GM12878 (cell line): ENCODE measurements at regions of chr5 and their contacts with region 1.

Region 1: GRCh38 chr5:156178117-156178516 is 148.8 kb upstream of the SGCD start:
- DNase-seq: no peak
- ATAC-seq: no peak
- H3K4me3 ChIP-seq: no peak overlapping the region
- H3K27ac ChIP-seq: no peak overlapping the region
- H3K4me1 ChIP-seq: no peaks in the 10 kb centered on the region
- H3K27me3 ChIP-seq: no peaks in the 10 kb centered on the region
- CTCF ChIP-seq: no peak
- EP300 ChIP-seq: no peak
- POLR2A ChIP-seq: no peak
- RAD21 ChIP-seq: no peak

Region 2: DNA sequence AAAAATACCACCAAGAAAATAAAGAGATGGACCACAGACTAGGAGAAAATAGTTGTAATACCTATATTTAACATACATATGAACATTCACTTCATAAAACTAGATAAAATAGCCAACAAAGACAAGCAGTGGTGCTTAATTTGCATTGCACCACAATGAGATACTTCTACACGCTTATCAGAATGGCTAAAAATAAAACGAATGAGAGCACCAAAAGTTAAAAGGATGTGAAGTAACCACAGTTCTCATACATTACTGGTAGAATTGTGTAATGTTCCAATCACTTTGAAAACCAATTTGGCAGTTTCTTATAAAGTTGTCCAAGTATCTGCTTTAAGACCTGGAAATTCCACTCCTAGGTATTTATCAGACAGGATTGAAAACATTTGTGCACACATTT is 50.1 kb before region 1 on chr5:
- CTCF ChIA-PET with region 1: no interaction called
- POLR2A ChIA-PET with region 1: interaction called, 10 read pairs
- RAD21 ChIA-PET with region 1: no interaction called
- SMC1A ChIA-PET with region 1: no interaction called
- in situ Hi-C with region 1: no loop called
- intact Hi-C with region 1: no loop called
- DNase-seq: peak; percentile 2
- ATAC-seq: peak; percentile 57
- H3K4me3 ChIP-seq: no peak overlapping the region
- H3K27ac ChIP-seq: no peak overlapping the region
- H3K4me1 ChIP-seq: no peaks in the 10 kb centered on the region
- H3K27me3 ChIP-seq: no peaks in the 10 kb centered on the region
- CTCF ChIP-seq: no peak
- EP300 ChIP-seq: no peak
- POLR2A ChIP-seq: no peak
- RAD21 ChIP-seq: no peak

Region 3: DNA sequence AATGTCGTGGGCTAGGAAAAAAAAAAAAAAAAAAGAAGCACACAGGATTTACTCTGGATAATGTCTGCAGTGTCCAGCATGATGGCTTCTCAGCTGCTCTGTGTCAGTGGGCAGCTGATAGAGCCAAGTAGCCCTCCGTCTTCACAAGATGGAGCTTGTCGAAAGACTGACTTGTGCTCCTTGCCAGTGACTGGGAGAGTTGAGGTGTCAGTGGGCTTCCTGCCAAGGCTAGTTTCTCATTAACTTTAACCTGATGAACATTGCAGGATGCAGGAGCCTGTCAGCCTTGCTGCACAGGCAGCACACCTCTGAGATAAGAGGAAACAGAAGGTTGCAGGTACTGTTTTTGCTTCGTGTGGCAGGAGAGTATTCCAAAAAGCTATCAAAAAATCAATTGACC is 22.5 kb before region 1 on chr5:
- CTCF ChIA-PET with region 1: no interaction called
- POLR2A ChIA-PET with region 1: no interaction called
- RAD21 ChIA-PET with region 1: no interaction called
- SMC1A ChIA-PET with region 1: no interaction called
- in situ Hi-C with region 1: no loop called
- intact Hi-C with region 1: no loop called
- DNase-seq: no peak
- ATAC-seq: no peak
- H3K4me3 ChIP-seq: no peak overlapping the region
- H3K27ac ChIP-seq: no peak overlapping the region
- H3K4me1 ChIP-seq: no peaks in the 10 kb centered on the region
- H3K27me3 ChIP-seq: no peaks in the 10 kb centered on the region; a peak in 1 of 4 replicates
- CTCF ChIP-seq: no peak
- EP300 ChIP-seq: no peak
- POLR2A ChIP-seq: no peak
- RAD21 ChIP-seq: no peak

Region 4: GRCh38 chr5:156197042-156197635 is 19.0 kb after region 1 on chr5:
- CTCF ChIA-PET with region 1: no interaction called
- POLR2A ChIA-PET with region 1: no interaction called
- RAD21 ChIA-PET with region 1: no interaction called
- SMC1A ChIA-PET with region 1: no interaction called
- in situ Hi-C with region 1: no loop called
- intact Hi-C with region 1: no loop called
- DNase-seq: no peak
- ATAC-seq: no peak
- H3K4me3 ChIP-seq: no peak overlapping the region
- H3K27ac ChIP-seq: no peak overlapping the region
- H3K4me1 ChIP-seq: no peaks in the 10 kb centered on the region
- H3K27me3 ChIP-seq: no peaks in the 10 kb centered on the region
- CTCF ChIP-seq: no peak
- EP300 ChIP-seq: no peak
- POLR2A ChIP-seq: no peak
- RAD21 ChIP-seq: no peak

Region 5: GRCh38 chr5:156631005-156631404 is 452.9 kb after region 1 on chr5:
- CTCF ChIA-PET with region 1: no interaction called
- POLR2A ChIA-PET with region 1: no interaction called
- RAD21 ChIA-PET with region 1: no interaction called
- SMC1A ChIA-PET with region 1: no interaction called
- in situ Hi-C with region 1: no loop called
- intact Hi-C with region 1: no loop called
- DNase-seq: no peak
- ATAC-seq: no peak
- H3K4me3 ChIP-seq: no peak overlapping the region
- H3K27ac ChIP-seq: no peak overlapping the region
- H3K4me1 ChIP-seq: no peaks in the 10 kb centered on the region
- H3K27me3 ChIP-seq: no peaks in the 10 kb centered on the region
- CTCF ChIP-seq: no peak
- EP300 ChIP-seq: no peak
- POLR2A ChIP-seq: no peak
- RAD21 ChIP-seq: no peak